ENCODE measurements at regions of chr11 and their contacts with region 1.

Region 1: GRCh38 chr11:35822815-35823495 is 120.9 kb upstream of the LDLRAD3 start:
- DNase-seq: peak; percentile 13
- ATAC-seq: no peak
- H3K4me3 ChIP-seq: no peak overlapping the region
- H3K27ac ChIP-seq: no peak overlapping the region
- H3K4me1 ChIP-seq: peaks cover 2% of the 10 kb centered on the region; the same call in 1 of the 2 replicates
- H3K27me3 ChIP-seq: no peaks in the 10 kb centered on the region
- CTCF ChIP-seq: no peak
- POLR2A ChIP-seq: no peak
- RAD21 ChIP-seq: no peak

Region 2: DNA sequence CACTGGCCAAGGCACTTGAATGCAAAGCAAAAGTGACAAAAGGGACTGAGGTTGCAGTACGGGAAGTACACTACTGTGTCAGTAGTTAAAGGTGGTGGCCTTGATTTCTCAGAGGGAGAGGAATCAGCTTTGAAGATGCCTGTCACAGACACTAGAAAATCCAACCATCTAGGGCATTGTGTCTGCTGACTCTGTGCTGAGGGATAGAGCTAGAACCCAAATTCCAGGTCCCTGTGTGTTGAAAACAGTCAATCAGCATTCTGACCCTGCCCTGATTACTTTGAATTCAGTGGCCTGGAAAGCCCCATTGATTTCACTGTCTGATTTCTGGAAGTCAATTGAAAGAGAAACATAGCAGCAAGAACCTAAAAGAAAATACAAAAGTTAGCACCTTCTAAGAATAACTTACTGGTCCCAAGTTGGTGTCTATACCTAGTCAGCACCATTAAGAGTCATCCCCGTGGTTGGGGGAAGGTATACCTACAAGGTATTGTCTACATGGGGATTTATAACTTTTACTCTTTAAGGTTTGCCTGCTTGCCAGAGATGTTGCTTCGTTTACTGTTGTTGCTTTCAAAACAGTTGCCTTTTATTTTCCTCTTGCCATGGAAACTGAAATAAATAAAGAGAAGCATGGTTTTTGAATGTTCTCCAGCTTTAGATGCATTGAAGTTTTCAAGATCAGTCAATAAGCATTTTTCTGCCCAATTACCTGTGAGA is 809.3 kb before region 1 on chr11:
- CTCF ChIA-PET with region 1: no interaction called
- POLR2A ChIA-PET with region 1: no interaction called
- dilution Hi-C with region 1: no loop called
- in situ Hi-C with region 1: no loop called
- intact Hi-C with region 1: no loop called
- DNase-seq: no peak
- ATAC-seq: no peak
- H3K4me3 ChIP-seq: no peak overlapping the region
- H3K27ac ChIP-seq: peak overlapping the region; percentile 22; the same call in 1 of the 2 replicates
- H3K4me1 ChIP-seq: peaks cover 34% of the 10 kb centered on the region
- H3K27me3 ChIP-seq: no peaks in the 10 kb centered on the region
- CTCF ChIP-seq: no peak
- POLR2A ChIP-seq: no peak
- RAD21 ChIP-seq: no peak

Region 3: GRCh38 chr11:35485656-35486322 is 337.2 kb before region 1 on chr11:
- CTCF ChIA-PET with region 1: interaction called, 5 read pairs
- POLR2A ChIA-PET with region 1: no interaction called
- dilution Hi-C with region 1: no loop called
- in situ Hi-C with region 1: no loop called
- intact Hi-C with region 1: loop called (anchors 5 kb)
- DNase-seq: peak; percentile 79
- ATAC-seq: peak; percentile 81
- H3K4me3 ChIP-seq: no peak overlapping the region
- H3K27ac ChIP-seq: no peak overlapping the region
- H3K4me1 ChIP-seq: peaks cover 17% of the 10 kb centered on the region
- H3K27me3 ChIP-seq: no peaks in the 10 kb centered on the region
- CTCF ChIP-seq: peak; percentile 90
- POLR2A ChIP-seq: no peak
- RAD21 ChIP-seq: peak; percentile 84

Region 4: GRCh38 chr11:35496416-35496815 is 326.5 kb before region 1 on chr11:
- CTCF ChIA-PET with region 1: no interaction called
- POLR2A ChIA-PET with region 1: no interaction called
- dilution Hi-C with region 1: no loop called
- in situ Hi-C with region 1: no loop called
- intact Hi-C with region 1: no loop called
- DNase-seq: no peak
- ATAC-seq: no peak
- H3K4me3 ChIP-seq: no peak overlapping the region
- H3K27ac ChIP-seq: no peak overlapping the region
- H3K4me1 ChIP-seq: peaks cover 8% of the 10 kb centered on the region
- H3K27me3 ChIP-seq: no peaks in the 10 kb centered on the region
- CTCF ChIP-seq: no peak
- POLR2A ChIP-seq: no peak
- RAD21 ChIP-seq: no peak

Region 5: DNA sequence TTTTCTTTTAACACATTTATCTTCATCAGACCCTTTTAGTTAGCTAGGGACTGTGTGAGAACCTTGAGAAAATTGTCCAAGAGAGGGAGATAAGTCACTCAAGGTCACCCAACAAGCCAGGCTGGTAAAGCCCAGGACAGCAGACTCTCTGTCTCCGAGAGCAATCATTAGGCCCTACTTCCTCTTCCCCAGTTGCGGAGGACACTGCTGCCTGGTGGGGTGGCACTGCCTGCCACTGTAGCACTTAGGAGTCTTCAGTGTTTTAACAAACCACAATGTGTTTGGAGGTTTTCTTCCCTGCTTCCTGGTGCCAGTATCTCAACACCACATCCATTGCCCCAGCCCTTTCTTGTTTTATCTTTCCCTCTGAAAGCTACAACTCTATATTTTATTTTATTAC is 11.2 kb before region 1 on chr11:
- CTCF ChIA-PET with region 1: interaction called, 19 read pairs
- POLR2A ChIA-PET with region 1: no interaction called
- dilution Hi-C with region 1: no loop called
- in situ Hi-C with region 1: no loop called
- intact Hi-C with region 1: no loop called
- DNase-seq: no peak
- ATAC-seq: no peak
- H3K4me3 ChIP-seq: no peak overlapping the region
- H3K27ac ChIP-seq: no peak overlapping the region
- H3K4me1 ChIP-seq: peaks cover 2% of the 10 kb centered on the region
- H3K27me3 ChIP-seq: no peaks in the 10 kb centered on the region
- CTCF ChIP-seq: no peak
- POLR2A ChIP-seq: no peak
- RAD21 ChIP-seq: no peak

Region 6: GRCh38 chr11:36123346-36124101 is 300.6 kb after region 1 on chr11:
- CTCF ChIA-PET with region 1: interaction called, 14 read pairs
- POLR2A ChIA-PET with region 1: no interaction called
- dilution Hi-C with region 1: no loop called
- in situ Hi-C with region 1: no loop called
- intact Hi-C with region 1: no loop called
- DNase-seq: no peak
- ATAC-seq: no peak
- H3K4me3 ChIP-seq: no peak overlapping the region
- H3K27ac ChIP-seq: no peak overlapping the region
- H3K4me1 ChIP-seq: peaks cover 5% of the 10 kb centered on the region; the same call in 1 of the 2 replicates
- H3K27me3 ChIP-seq: no peaks in the 10 kb centered on the region
- CTCF ChIP-seq: no peak
- POLR2A ChIP-seq: no peak
- RAD21 ChIP-seq: no peak

Region 7: GRCh38 chr11:36149538-36150242 is 326.7 kb after region 1 on chr11:
- CTCF ChIA-PET with region 1: interaction called, 4 read pairs
- POLR2A ChIA-PET with region 1: no interaction called
- dilution Hi-C with region 1: no loop called
- in situ Hi-C with region 1: no loop called
- intact Hi-C with region 1: loop called (anchors 5 kb)
- DNase-seq: peak; percentile 100
- ATAC-seq: peak; percentile 96
- H3K4me3 ChIP-seq: no peak overlapping the region
- H3K27ac ChIP-seq: peak overlapping the region; percentile 76
- H3K4me1 ChIP-seq: peaks cover 10% of the 10 kb centered on the region
- H3K27me3 ChIP-seq: no peaks in the 10 kb centered on the region
- CTCF ChIP-seq: peak; percentile 66
- POLR2A ChIP-seq: no peak
- RAD21 ChIP-seq: peak; percentile 75

Region 8: DNA sequence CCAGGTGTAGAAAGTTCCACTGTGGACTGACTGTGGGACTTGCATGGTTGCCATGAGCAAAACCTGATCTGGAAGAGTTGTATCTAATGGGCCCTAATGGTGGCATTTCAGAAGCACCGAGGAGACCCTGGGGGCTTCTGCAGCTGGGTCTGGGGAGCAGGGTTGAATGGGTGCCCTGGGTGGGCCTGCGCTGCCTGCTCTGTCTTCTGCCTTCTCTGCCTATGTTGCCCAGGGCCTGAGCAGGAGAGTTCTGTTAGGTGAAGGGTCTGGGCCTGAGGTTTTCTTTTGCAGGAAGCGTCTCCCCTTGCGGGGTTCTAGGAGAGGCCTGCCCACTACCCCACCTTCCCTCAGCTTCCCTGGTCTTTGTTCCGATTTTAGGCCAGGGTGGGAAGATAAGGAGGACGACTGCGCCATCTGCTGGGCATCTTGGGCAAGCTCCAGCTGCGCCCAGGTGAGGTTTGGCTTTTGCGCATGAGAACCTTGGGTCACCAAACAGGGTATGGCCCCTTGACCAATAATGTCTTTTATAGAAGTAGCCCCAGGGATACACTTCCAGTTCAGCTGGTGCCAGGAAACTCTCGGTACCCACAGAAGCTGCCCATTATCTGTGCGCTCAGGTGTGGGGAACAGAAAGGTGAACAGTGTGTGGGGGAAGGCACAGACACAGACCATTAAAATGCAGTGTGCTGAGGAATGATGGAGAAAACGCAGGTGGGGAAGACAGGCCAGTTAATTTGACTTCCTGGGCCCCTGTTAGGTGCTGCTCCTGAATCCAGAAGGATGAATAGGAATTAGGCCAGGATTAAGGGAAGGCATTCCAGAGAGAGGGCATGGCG is 443.1 kb after region 1 on chr11:
- CTCF ChIA-PET with region 1: interaction called, 13 read pairs
- POLR2A ChIA-PET with region 1: no interaction called
- dilution Hi-C with region 1: no loop called
- in situ Hi-C with region 1: loop called (anchors 5 kb)
- intact Hi-C with region 1: no loop called
- DNase-seq: peak; percentile 42
- ATAC-seq: peak; percentile 90
- H3K4me3 ChIP-seq: no peak overlapping the region
- H3K27ac ChIP-seq: no peak overlapping the region
- H3K4me1 ChIP-seq: no peaks in the 10 kb centered on the region
- H3K27me3 ChIP-seq: peaks cover 26% of the 10 kb centered on the region
- CTCF ChIP-seq: peak; percentile 82
- POLR2A ChIP-seq: no peak
- RAD21 ChIP-seq: peak; percentile 92